Activated T-helper 2 cell treated with anti-CD3 and anti-CD28 coated beads, Interferon-gamma antibody, Interleukin-2, Interleukin-4, amounts not matched to agents 10 μg/mL and 5 μg/mL and 100 μg/mL, durations not matched to agents 14 hours and 24 hours and 36 hours (primary cell): ENCODE measurements at regions of chr14 and their contacts with region 1.

Region 1: DNA sequence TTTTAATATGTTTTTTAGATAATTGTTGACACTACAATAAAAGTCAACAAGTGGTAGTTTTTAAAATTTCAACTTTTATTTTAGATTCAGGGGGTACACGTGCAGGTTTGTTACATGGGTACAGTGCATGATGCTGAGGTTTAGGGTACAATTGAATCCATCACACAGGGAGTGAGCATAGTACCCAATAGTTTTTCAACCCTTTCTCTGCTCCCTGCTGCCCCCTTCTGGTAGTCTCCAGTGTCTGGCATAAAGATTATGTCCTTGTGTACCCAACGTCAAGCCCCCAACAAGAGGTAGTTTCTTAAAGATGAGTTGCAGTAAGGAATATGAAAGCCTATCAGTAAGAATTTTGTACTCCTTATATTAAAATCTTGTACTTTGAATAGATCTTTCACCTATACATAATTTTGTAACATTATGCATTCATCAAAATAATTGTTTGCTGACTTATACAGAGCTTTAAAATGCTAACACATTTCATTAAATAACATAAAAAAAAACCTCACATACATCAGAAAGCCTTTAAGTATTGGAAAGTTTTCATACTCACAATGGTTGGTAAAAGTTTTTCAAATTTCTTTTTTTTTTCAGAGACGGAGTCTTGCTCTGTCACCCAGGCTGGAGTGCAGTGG is 5.4 kb upstream of the RALGAPA1 start:
- DNase-seq: peak; percentile 66
- H3K4me3 Mint-ChIP-seq: no peak overlapping the region
- H3K27ac Mint-ChIP-seq: no peak overlapping the region
- H3K4me1 Mint-ChIP-seq: no peaks in the 10 kb centered on the region
- H3K27me3 Mint-ChIP-seq: peaks cover 11% of the 10 kb centered on the region

Region 2: DNA sequence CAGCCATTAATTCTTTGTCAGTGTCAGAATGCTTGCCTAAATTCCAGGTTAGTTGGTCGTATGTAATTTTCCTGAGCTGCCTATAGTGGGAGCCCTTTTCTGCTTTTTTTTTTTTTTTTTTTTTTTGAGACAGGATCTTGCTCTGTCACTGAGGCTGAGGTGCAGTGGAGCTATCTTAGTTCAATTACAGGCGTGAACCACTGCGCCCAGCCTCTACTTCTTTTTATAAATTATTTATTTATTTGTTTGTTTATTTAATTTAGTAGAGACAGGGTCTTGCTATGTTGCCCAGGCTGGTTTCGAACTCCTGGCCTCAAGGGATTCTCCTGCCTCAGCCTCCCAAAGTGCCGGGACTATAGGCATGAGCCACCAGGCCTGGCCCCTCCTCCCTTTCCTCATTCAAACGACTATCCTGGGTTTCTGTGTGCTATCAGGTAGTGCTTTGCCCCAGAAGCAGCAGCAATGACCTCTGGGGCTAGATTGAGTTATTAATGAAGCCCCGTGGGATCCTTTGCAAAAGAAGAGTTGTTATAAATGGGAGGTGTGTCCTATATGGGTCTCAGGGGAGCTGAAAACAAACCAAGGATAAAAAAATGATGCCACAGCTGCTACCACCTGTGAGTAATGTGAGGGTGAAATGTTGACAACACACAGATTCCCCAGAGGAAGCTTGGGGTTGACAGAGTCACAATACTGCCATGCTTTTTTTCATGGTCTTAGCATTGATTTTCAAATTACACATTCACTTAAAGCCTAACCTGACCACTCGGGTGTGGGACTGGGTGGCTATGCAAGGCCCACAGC is 375.4 kb before region 1 on chr14:
- intact Hi-C with region 1: loop called (anchors 2 kb)
- DNase-seq: no peak
- H3K4me3 Mint-ChIP-seq: no peak overlapping the region
- H3K27ac Mint-ChIP-seq: no peak overlapping the region
- H3K4me1 Mint-ChIP-seq: peaks cover 6% of the 10 kb centered on the region
- H3K27me3 Mint-ChIP-seq: no peaks in the 10 kb centered on the region

Region 3: GRCh38 chr14:35533357-35534207 is 280.9 kb before region 1 on chr14 and contains the start of gene INSM2:
- intact Hi-C with region 1: loop called (anchors 5 kb)
- DNase-seq: peak; percentile 47
- H3K4me3 Mint-ChIP-seq: peak within 1 kb of the TSS; percentile 73
- H3K27ac Mint-ChIP-seq: no peak within 1 kb of the TSS
- H3K4me1 Mint-ChIP-seq: peaks cover 6% of the 10 kb centered on the region
- H3K27me3 Mint-ChIP-seq: peaks cover 72% of the 10 kb centered on the region
- total RNA-seq, gene INSM2: not detected in 2 replicates

Region 4: GRCh38 chr14:35637851-35638250 is 176.6 kb before region 1 on chr14:
- intact Hi-C with region 1: no loop called
- DNase-seq: no peak
- H3K4me3 Mint-ChIP-seq: no peak overlapping the region
- H3K27ac Mint-ChIP-seq: no peak overlapping the region
- H3K4me1 Mint-ChIP-seq: no peaks in the 10 kb centered on the region
- H3K27me3 Mint-ChIP-seq: no peaks in the 10 kb centered on the region

Region 5: DNA sequence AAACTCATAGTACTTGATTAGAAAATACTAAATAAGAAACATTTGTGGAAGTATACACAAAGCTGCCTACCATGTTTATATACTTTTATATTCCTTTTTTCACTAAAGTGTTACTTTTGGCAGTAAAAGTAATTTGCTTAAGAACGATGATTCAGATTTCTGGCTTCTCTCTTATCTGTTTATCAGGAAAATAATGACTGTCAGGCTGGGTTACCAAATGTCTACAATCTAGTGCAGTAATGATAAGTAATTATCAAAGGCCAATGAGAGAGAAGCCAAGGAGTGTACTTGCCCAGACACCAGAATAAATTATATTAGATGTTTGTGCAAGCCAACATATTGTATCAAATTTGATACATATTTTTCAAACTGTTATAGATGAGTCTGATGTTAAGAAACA is 118.8 kb before region 1 on chr14:
- intact Hi-C with region 1: no loop called
- DNase-seq: no peak
- H3K4me3 Mint-ChIP-seq: no peak overlapping the region
- H3K27ac Mint-ChIP-seq: no peak overlapping the region
- H3K4me1 Mint-ChIP-seq: peaks cover 17% of the 10 kb centered on the region
- H3K27me3 Mint-ChIP-seq: peaks cover 1% of the 10 kb centered on the region